PC-9 (cell line): ENCODE measurements at regions of chr7 and their contacts with region 1.

Region 1: GRCh38 chr7:140209866-140210609 is 33.3 kb upstream of the KDM7A start:
- DNase-seq: no peak
- H3K4me3 ChIP-seq: no peak overlapping the region
- H3K27ac ChIP-seq: no peak overlapping the region
- H3K4me1 ChIP-seq: peaks cover 15% of the 10 kb centered on the region; the same call in 1 of the 2 replicates
- H3K27me3 ChIP-seq: no peaks in the 10 kb centered on the region
- CTCF ChIP-seq: no peak

Region 2: DNA sequence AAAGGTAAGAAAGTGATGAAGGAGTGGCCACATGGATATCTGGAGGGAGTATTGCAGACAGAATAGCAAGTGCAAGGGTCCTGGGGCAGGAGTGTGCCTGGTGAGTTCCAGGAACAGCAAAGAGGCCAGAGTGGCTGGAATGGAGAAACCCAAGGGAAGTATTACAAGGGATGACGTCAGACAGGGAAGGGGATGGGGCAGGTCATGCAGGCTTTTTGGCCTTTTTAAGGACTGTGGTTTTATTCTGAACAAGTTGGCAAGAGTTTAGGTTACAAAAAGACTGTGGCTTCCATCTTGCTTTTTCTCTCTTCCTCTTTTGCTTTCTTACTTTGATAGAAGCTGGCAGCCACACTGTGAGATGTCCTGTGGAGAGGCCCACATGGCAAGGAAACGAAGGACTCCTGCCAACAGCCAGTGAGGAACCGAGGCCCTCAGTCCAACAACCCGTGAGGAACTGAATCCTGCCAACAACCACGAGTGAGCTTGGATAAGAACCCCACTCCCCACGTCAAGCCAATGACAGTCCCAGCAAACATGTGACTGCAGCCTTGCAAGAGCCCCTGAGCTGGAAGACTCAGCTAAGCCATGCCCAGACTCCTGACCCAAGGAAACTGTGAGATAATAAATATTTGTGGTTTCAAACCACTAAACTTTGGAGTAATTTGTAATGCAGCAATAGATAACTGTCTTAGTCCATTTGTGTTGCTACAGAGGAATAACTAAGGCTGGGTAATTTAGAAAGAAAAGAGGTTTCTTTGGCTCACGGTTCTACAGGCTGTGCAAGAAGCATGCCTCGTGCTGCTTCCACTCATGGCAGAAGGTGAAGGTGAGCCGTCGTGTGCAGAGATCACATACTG is 13.4 kb before region 1 on chr7:
- CTCF ChIA-PET with region 1: no interaction called
- POLR2A ChIA-PET with region 1: interaction called, 11 read pairs
- intact Hi-C with region 1: no loop called
- DNase-seq: no peak
- H3K4me3 ChIP-seq: no peak overlapping the region
- H3K27ac ChIP-seq: no peak overlapping the region
- H3K4me1 ChIP-seq: no peaks in the 10 kb centered on the region
- H3K27me3 ChIP-seq: no peaks in the 10 kb centered on the region
- CTCF ChIP-seq: no peak

Region 3: GRCh38 chr7:140230861-140231770 is 21.1 kb after region 1 on chr7:
- CTCF ChIA-PET with region 1: no interaction called
- POLR2A ChIA-PET with region 1: no interaction called
- intact Hi-C with region 1: no loop called
- DNase-seq: no peak
- H3K4me3 ChIP-seq: peak overlapping the region; percentile 50
- H3K27ac ChIP-seq: no peak overlapping the region
- H3K4me1 ChIP-seq: 0 out of 2 replicates have a peak, but pooled peaks cover 13% of the 10 kb centered on the region
- H3K27me3 ChIP-seq: peaks cover 15% of the 10 kb centered on the region
- CTCF ChIP-seq: no peak

Region 4: GRCh38 chr7:140263277-140263676 is 53.2 kb after region 1 on chr7:
- CTCF ChIA-PET with region 1: no interaction called
- POLR2A ChIA-PET with region 1: interaction called, 10 read pairs
- intact Hi-C with region 1: no loop called
- DNase-seq: no peak
- H3K4me3 ChIP-seq: no peak overlapping the region
- H3K27ac ChIP-seq: no peak overlapping the region
- H3K4me1 ChIP-seq: no peaks in the 10 kb centered on the region
- H3K27me3 ChIP-seq: no peaks in the 10 kb centered on the region
- CTCF ChIP-seq: no peak

Region 5: DNA sequence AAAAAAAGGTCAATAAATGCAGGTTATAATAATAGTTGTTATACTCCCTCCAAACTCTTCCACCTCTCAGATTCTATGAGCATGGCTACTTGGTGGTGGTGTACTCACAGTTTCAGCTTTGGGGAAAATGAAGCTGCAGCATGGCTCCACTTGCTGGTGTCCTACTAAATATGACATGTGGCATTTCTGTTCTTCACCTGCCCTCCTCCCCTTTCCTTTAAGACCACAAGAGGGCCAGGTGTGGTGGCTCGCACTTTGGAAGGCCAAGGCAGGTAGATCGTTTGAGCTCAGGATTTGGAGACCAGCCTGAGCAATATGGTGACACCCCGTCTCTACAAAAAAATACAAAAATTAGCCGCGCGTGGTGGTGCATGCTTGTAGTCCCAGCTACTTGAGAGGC is 87.2 kb after region 1 on chr7:
- CTCF ChIA-PET with region 1: no interaction called
- POLR2A ChIA-PET with region 1: no interaction called
- intact Hi-C with region 1: no loop called
- DNase-seq: no peak
- H3K4me3 ChIP-seq: no peak overlapping the region
- H3K27ac ChIP-seq: no peak overlapping the region
- H3K4me1 ChIP-seq: no peaks in the 10 kb centered on the region
- H3K27me3 ChIP-seq: no peaks in the 10 kb centered on the region
- CTCF ChIP-seq: no peak